ENCODE measurements at regions of chr17 and their contacts with region 1.

Region 1: DNA sequence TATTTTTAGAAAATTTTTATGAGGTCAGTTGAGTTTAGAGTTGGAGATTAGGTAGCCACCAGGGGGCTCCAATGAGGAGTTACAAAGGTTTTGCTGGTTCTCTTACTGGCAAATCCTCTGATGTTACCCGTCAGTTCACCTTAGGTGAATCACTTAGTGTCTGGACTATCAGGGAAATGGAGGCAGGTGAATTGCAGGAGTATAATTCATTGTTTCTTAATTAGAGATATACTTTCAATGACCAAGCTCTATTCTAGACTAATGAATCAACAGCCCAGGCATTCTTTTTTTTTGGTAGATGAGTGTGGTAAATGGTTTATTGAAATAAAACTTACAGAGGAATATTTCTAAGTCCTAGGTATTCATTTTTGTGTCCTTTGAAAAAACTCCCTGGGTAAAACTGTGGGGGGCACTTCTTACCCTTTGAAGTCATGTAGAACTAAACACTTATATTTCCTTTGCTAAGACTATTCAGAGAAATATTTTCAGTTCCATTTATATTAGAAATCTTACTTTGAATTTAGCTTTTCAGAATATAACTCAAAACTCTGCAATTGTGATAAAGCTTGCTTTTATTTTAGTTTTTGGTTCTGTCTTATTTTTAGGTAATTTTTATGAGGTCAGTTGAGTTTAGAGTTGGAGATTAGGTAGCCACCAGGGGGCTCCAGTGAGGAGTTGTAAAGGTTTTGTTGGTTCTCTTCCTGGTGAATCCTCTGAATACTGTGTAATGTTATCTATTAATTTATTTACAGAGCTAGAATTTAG is 17.7 kb downstream of the PSMD11 start:
- DNase-seq: no peak
- ATAC-seq: peak; percentile 74
- H3K4me3 Mint-ChIP-seq: no peak overlapping the region
- H3K27ac Mint-ChIP-seq: peak overlapping the region; percentile 30
- H3K4me1 Mint-ChIP-seq: peaks cover 13% of the 10 kb centered on the region
- H3K27me3 Mint-ChIP-seq: no peaks in the 10 kb centered on the region
- CTCF ChIP-seq: no peak

Region 2: DNA sequence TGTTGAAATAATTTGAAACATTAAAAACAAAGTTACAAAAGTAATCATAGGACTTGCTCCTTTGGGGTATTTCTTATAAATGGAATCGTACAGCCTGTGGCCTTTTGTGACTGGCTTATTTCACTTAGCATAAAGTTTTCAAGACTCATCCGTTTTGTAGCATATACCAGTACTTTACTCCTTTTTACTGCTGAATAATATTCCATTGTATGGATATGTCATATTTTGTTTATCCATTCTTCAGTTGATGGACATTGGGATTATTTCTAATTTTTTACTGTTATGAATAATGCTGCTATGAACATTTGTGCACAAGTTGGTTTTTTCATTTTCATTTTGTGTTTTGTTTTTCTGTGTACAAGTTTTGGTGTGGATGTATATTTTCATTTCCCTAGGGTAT is 226.4 kb before region 1 on chr17:
- CTCF ChIA-PET with region 1: no interaction called
- POLR2A ChIA-PET with region 1: no interaction called
- intact Hi-C with region 1: no loop called
- DNase-seq: no peak
- ATAC-seq: no peak
- H3K4me3 Mint-ChIP-seq: no peak overlapping the region
- H3K27ac Mint-ChIP-seq: no peak overlapping the region
- H3K4me1 Mint-ChIP-seq: no peaks in the 10 kb centered on the region
- H3K27me3 Mint-ChIP-seq: no peaks in the 10 kb centered on the region
- CTCF ChIP-seq: no peak

Region 3: GRCh38 chr17:32444308-32445073 is 17.5 kb before region 1 on chr17 and contains the start of gene PSMD11:
- CTCF ChIA-PET with region 1: interaction called, 21 read pairs
- POLR2A ChIA-PET with region 1: interaction called, 18 read pairs
- intact Hi-C with region 1: no loop called
- DNase-seq: peak; percentile 99
- ATAC-seq: peak; percentile 97
- H3K4me3 Mint-ChIP-seq: peak within 1 kb of the TSS; percentile 89
- H3K27ac Mint-ChIP-seq: peak within 1 kb of the TSS; percentile 65
- H3K4me1 Mint-ChIP-seq: peaks cover 28% of the 10 kb centered on the region
- H3K27me3 Mint-ChIP-seq: no peaks in the 10 kb centered on the region
- CTCF ChIP-seq: no peak
- total RNA-seq, gene PSMD11: 115 and 117 TPM in 2 replicates

Region 4: DNA sequence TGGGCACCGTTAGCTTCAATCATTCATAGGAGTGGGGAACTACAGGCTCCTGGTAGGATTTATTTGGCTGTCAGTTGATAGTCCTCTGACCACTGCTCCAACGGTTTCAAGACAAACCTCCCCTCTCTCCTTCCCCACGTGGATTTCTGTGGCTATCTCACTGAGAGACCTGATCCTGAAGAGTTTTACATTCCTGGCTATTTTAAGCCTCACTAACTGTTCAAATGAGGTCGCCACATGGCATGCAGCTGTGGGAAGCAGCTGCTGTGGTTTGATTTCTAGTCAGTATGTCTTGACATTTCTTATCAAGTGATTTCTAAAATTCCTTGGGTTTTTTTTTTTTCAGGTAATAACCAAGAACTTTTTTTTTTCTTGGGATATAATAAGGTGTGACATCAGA is 63.1 kb after region 1 on chr17:
- CTCF ChIA-PET with region 1: interaction called, 11 read pairs
- POLR2A ChIA-PET with region 1: interaction called, 3 read pairs
- intact Hi-C with region 1: no loop called
- DNase-seq: no peak
- ATAC-seq: no peak
- H3K4me3 Mint-ChIP-seq: no peak overlapping the region
- H3K27ac Mint-ChIP-seq: peak overlapping the region; percentile 93
- H3K4me1 Mint-ChIP-seq: peaks cover 74% of the 10 kb centered on the region
- H3K27me3 Mint-ChIP-seq: no peaks in the 10 kb centered on the region
- CTCF ChIP-seq: no peak

Region 5: GRCh38 chr17:32659419-32659842 is 197.4 kb after region 1 on chr17:
- CTCF ChIA-PET with region 1: interaction called, 10 read pairs
- POLR2A ChIA-PET with region 1: no interaction called
- intact Hi-C with region 1: no loop called
- DNase-seq: peak; percentile 43
- ATAC-seq: peak; percentile 64
- H3K4me3 Mint-ChIP-seq: no peak overlapping the region
- H3K27ac Mint-ChIP-seq: no peak overlapping the region
- H3K4me1 Mint-ChIP-seq: no peaks in the 10 kb centered on the region
- H3K27me3 Mint-ChIP-seq: no peaks in the 10 kb centered on the region
- CTCF ChIP-seq: no peak